ENCODE measurements at regions of chr11 and their contacts with region 1.

Region 1: GRCh38 chr11:2151500-2152257 is 9.3 kb downstream of the INS start:
- DNase-seq: peak; percentile 70 to 86
- H3K4me3 ChIP-seq: no peak overlapping the region
- H3K27ac ChIP-seq: no peak overlapping the region
- H3K4me1 ChIP-seq: peaks cover 0 to 6% (median 3%) of the 10 kb centered on the region in 4 donors
- H3K27me3 ChIP-seq: peaks cover 0 to 73% of the 10 kb centered on the region in 2 donors
- CTCF ChIP-seq: peak; percentile 78 to 89

Region 2: GRCh38 chr11:1652771-1653540 is 498.7 kb before region 1 on chr11:
- intact Hi-C with region 1: loop called (anchors 10 kb)
- DNase-seq: peak; percentile 71 to 78
- H3K4me3 ChIP-seq: no peak overlapping the region
- H3K27ac ChIP-seq: no peak overlapping the region
- H3K4me1 ChIP-seq: peaks cover 0 to 8% (median 4%) of the 10 kb centered on the region in 4 donors
- H3K27me3 ChIP-seq: peaks cover 0 to 39% of the 10 kb centered on the region in 2 donors
- CTCF ChIP-seq: peak; percentile 95 to 97

Region 3: GRCh38 chr11:1837171-1838076 is 314.3 kb before region 1 on chr11:
- intact Hi-C with region 1: loop called (anchors 5 kb)
- DNase-seq: no peak
- H3K4me3 ChIP-seq: no peak overlapping the region
- H3K27ac ChIP-seq: no peak overlapping the region
- H3K4me1 ChIP-seq: peaks cover 0 to 28% (median 8%) of the 10 kb centered on the region in 4 donors
- H3K27me3 ChIP-seq: peaks cover 0 to 5% of the 10 kb centered on the region in 2 donors
- CTCF ChIP-seq: peak; percentile 88 to 91

Region 4: GRCh38 chr11:1882519-1883238 is 269.0 kb before region 1 on chr11:
- intact Hi-C with region 1: loop called (anchors 10 kb)
- DNase-seq: peak; percentile 64 to 84
- H3K4me3 ChIP-seq: no peak overlapping the region
- H3K27ac ChIP-seq: peak overlapping the region; percentile 41 to 79
- H3K4me1 ChIP-seq: peaks cover 0 to 31% (median 15%) of the 10 kb centered on the region in 4 donors
- H3K27me3 ChIP-seq: peaks cover 0 to 2% of the 10 kb centered on the region in 2 donors
- CTCF ChIP-seq: peak; percentile 74 to 80

Region 5: GRCh38 chr11:2036863-2037486 is 114.7 kb before region 1 on chr11:
- intact Hi-C with region 1: no loop called
- DNase-seq: no peak
- H3K4me3 ChIP-seq: no peak overlapping the region
- H3K27ac ChIP-seq: no peak overlapping the region
- H3K4me1 ChIP-seq: no peaks in the 10 kb centered on the region
- H3K27me3 ChIP-seq: no peaks in the 10 kb centered on the region
- CTCF ChIP-seq: no peak